Right cardiac atrium (tissue), 5 donors: ENCODE measurements at regions of chr10 and their contacts with region 1.

Region 1: DNA sequence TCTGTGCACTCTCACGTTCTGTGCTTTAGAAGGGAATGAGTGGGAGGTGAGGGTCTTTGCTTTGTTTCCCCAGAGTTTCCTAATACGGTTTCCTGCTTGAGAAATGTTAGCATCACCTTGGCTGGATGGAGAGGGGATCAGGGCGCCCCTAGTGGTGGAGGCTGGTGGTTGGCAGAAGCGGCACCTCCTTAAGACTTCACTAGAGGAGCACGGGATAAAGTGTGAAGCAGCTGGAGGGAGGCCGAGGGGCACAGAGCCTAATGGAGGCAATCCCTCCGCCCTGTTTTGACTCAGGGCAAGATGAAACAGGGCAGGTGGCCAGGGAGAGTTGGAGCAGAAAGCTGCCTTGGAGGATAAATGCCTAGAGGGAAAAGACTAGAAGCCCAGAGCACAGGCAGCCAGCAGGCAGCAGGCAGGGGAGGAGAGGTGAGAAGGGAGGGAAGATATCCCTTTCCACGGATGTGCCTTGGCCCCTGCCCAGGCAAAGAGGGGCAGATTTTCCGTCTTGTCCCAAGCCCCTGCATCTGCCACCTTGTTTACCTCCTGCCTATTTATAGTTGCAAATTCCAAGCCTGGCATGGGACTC is 56.0 kb upstream of the BTRC start:
- DNase-seq: peak; percentile 57 to 82 (median 78)
- ATAC-seq: peak; percentile 28 to 68
- H3K4me3 ChIP-seq: no peak overlapping the region
- H3K27ac ChIP-seq: no peak overlapping the region
- H3K4me1 ChIP-seq: no peaks in the 10 kb centered on the region
- H3K27me3 ChIP-seq: no peaks in the 10 kb centered on the region

Region 2: GRCh38 chr10:101405001-101405400 is 107.0 kb after region 1 on chr10:
- intact Hi-C with region 1: no loop called
- DNase-seq: no peak
- ATAC-seq: no peak
- H3K4me3 ChIP-seq: no peak overlapping the region
- H3K27ac ChIP-seq: no peak overlapping the region
- H3K4me1 ChIP-seq: no peaks in the 10 kb centered on the region
- H3K27me3 ChIP-seq: no peaks in the 10 kb centered on the region

Region 3: GRCh38 chr10:101441541-101442455 is 143.8 kb after region 1 on chr10:
- intact Hi-C with region 1: loop called in 1 of 4 experiments (anchors 10 kb)
- DNase-seq: peak in 2 of 3 donors; percentile 12 to 40
- ATAC-seq: peak; percentile 88 to 90
- H3K4me3 ChIP-seq: no peak overlapping the region
- H3K27ac ChIP-seq: no peak overlapping the region
- H3K4me1 ChIP-seq: peaks cover 2% of the 10 kb centered on the region
- H3K27me3 ChIP-seq: no peaks in the 10 kb centered on the region

Region 4: GRCh38 chr10:101467286-101467770 is 169.3 kb after region 1 on chr10:
- intact Hi-C with region 1: loop called in 1 of 4 experiments (anchors 10 kb)
- DNase-seq: no peak
- ATAC-seq: peak; percentile 84
- H3K4me3 ChIP-seq: no peak overlapping the region
- H3K27ac ChIP-seq: no peak overlapping the region
- H3K4me1 ChIP-seq: no peaks in the 10 kb centered on the region
- H3K27me3 ChIP-seq: no peaks in the 10 kb centered on the region

Region 5: GRCh38 chr10:101569838-101570766 is 272.1 kb after region 1 on chr10:
- intact Hi-C with region 1: loop called in 1 of 4 experiments (anchors 10 kb)
- DNase-seq: peak; percentile 81 to 94 (median 92)
- ATAC-seq: peak; percentile 89 to 91
- H3K4me3 ChIP-seq: peak overlapping the region; percentile 72
- H3K27ac ChIP-seq: no peak overlapping the region
- H3K4me1 ChIP-seq: no peaks in the 10 kb centered on the region
- H3K27me3 ChIP-seq: no peaks in the 10 kb centered on the region